ENCODE measurements at regions of chr9 and their contacts with region 1.

Region 1: GRCh38 chr9:128370826-128371621 is at the start of gene URM1:
- DNase-seq: peak; percentile 88 to 97 (median 95)
- ATAC-seq: peak; percentile 98
- H3K4me3 ChIP-seq: peak within 1 kb of the TSS; percentile 92
- H3K4me3 Mint-ChIP-seq: peak within 1 kb of the TSS; percentile 86 to 99 (median 96)
- H3K27ac ChIP-seq: peak within 1 kb of the TSS; percentile 94
- H3K27ac Mint-ChIP-seq: peak within 1 kb of the TSS; percentile 94 to 99 (median 98)
- H3K4me1 ChIP-seq: peaks cover 17% of the 10 kb centered on the region in 2 donors
- H3K4me1 Mint-ChIP-seq: peaks cover 18 to 41% (median 36%) of the 10 kb centered on the region in 7 donors
- H3K27me3 ChIP-seq: no peaks in the 10 kb centered on the region
- H3K27me3 Mint-ChIP-seq: no peaks in the 10 kb centered on the region
- total RNA-seq, gene URM1: 32.3 to 72.4 (median 47.5) TPM

Region 2: DNA sequence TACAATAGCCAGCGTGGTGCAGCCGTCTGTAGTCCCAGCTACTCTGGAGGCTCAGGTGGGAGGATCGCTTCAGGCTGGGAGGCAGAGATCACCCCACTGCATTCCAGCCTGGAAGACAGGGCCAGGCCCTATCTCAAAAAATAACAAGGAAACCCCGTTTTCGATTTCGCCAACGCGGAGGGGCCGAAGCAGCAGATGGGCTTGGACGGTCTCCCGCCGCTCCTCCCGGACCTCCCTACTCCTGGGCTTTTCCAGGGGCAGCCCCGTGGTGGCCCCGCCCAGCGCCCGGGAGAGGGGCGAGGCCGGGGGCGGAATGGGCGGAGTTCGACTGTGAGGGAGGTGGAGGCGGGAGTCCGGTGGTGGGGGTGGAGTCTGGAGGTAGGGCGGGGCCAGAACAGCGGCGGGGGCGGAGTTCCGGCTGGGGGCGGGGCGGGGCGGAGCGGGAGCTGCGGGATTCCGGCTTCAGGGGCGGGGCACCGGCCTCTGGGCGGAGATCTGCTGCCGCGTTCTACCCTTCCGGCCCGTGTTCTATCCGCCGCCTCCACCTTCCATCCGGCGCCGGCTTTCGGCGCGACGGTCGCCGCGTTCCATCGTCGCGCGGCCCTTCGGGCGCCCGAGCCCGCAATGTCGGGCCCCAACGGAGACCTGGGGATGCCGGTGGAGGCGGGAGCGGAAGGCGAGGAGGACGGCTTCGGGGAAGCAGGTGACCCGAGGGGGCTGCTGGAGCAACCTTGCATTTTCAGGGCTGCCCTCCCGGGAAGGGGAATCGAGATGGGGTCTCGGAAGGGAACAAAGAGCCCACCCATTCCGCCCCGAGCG is 211.0 kb before region 1 on chr9 and contains the start of gene BBLN:
- CTCF ChIA-PET with region 1: no interaction called
- POLR2A ChIA-PET with region 1: interaction called, 4 read pairs
- intact Hi-C with region 1: loop called in 1 of 2 experiments (anchors 1 kb)
- DNase-seq: peak; percentile 78 to 94 (median 87)
- ATAC-seq: peak; percentile 94
- H3K4me3 ChIP-seq: peak within 1 kb of the TSS; percentile 97
- H3K4me3 Mint-ChIP-seq: peak within 1 kb of the TSS; percentile 79 to 90 (median 82)
- H3K27ac ChIP-seq: peak within 1 kb of the TSS; percentile 78
- H3K27ac Mint-ChIP-seq: peak within 1 kb of the TSS; percentile 84 to 95 (median 93)
- H3K4me1 ChIP-seq: peaks cover 11 to 12% of the 10 kb centered on the region in 2 donors
- H3K4me1 Mint-ChIP-seq: peaks cover 0 to 28% (median 21%) of the 10 kb centered on the region in 7 donors
- H3K27me3 ChIP-seq: no peaks in the 10 kb centered on the region
- H3K27me3 Mint-ChIP-seq: no peaks in the 10 kb centered on the region
- total RNA-seq, gene BBLN: 42.7 to 87.8 (median 48.0) TPM

Region 3: GRCh38 chr9:128275996-128276573 is 94.9 kb before region 1 on chr9 and contains the starts of genes GOLGA2 and SWI5:
- CTCF ChIA-PET with region 1: no interaction called
- POLR2A ChIA-PET with region 1: interaction called, 6 read pairs
- intact Hi-C with region 1: loop called (anchors 1 kb)
- DNase-seq: peak; percentile 98 to 100 (median 100)
- ATAC-seq: peak; percentile 98
- H3K4me3 ChIP-seq: peak within 1 kb of the TSS; percentile 95
- H3K4me3 Mint-ChIP-seq: peak within 1 kb of the TSS; percentile 94 to 98 (median 96)
- H3K27ac ChIP-seq: peak within 1 kb of the TSS; percentile 90
- H3K27ac Mint-ChIP-seq: peak within 1 kb of the TSS; percentile 94 to 98 (median 97)
- H3K4me1 ChIP-seq: peaks cover 16 to 21% of the 10 kb centered on the region in 2 donors
- H3K4me1 Mint-ChIP-seq: peaks cover 24 to 51% (median 46%) of the 10 kb centered on the region in 7 donors
- H3K27me3 ChIP-seq: no peaks in the 10 kb centered on the region
- H3K27me3 Mint-ChIP-seq: peaks cover 0 to 7% (median 0%) of the 10 kb centered on the region in 5 donors
- total RNA-seq, gene GOLGA2: 56.5 to 76.6 (median 70.6) TPM
- total RNA-seq, gene SWI5: 8.7 to 17.4 (median 9.8) TPM

Region 4: DNA sequence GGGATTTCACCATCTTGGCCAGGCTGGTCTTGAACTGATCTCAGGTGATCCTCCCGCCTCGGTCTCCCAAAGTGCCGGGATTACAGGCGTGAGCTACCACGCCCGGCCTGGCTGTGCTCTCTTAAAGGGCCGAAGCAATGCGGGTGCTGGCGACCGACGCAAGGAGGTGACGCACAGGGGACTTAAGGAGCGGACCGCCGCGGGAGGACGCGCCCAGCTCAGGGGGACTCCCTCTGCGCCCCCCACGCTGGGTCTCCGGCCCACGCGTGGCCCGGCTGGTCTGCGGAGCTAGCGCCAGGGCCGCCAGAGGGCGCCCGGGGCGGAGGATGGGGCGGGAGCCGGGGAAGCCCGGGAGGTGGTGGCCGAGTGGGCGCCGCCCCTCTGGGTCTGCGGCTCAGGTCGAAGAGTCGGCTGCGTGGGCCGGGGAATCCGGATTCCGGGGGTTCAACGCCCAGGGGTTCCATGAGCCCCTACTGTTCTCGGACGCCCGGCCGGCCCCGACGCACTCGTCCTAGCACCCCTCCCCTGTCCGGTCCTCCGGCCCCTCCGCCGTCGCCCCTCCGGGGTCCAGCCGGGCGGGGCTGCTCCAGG is 49.1 kb after region 1 on chr9:
- CTCF ChIA-PET with region 1: no interaction called
- POLR2A ChIA-PET with region 1: no interaction called
- intact Hi-C with region 1: loop called (anchors 1 to 2 kb)
- DNase-seq: peak in 8 of 9 donors; percentile 33 to 85 (median 44)
- ATAC-seq: peak; percentile 92
- H3K4me3 ChIP-seq: peak overlapping the region; percentile 58
- H3K4me3 Mint-ChIP-seq: peak overlapping the region; percentile 70 to 88 (median 81)
- H3K27ac ChIP-seq: no peak overlapping the region
- H3K27ac Mint-ChIP-seq: no peak overlapping the region
- H3K4me1 ChIP-seq: peaks cover 8 to 9% of the 10 kb centered on the region in 2 donors
- H3K4me1 Mint-ChIP-seq: peaks cover 5 to 13% (median 11%) of the 10 kb centered on the region in 7 donors
- H3K27me3 ChIP-seq: peaks cover 5 to 7% of the 10 kb centered on the region in 2 donors
- H3K27me3 Mint-ChIP-seq: peaks cover 16 to 55% (median 25%) of the 10 kb centered on the region in 5 donors

Region 5: GRCh38 chr9:128575469-128575868 is 204.4 kb after region 1 on chr9:
- CTCF ChIA-PET with region 1: no interaction called
- POLR2A ChIA-PET with region 1: no interaction called
- intact Hi-C with region 1: no loop called
- DNase-seq: no peak
- ATAC-seq: no peak
- H3K4me3 ChIP-seq: no peak overlapping the region
- H3K4me3 Mint-ChIP-seq: peak overlapping the region in 4 of 10 donors; percentile 3 to 50 (median 30)
- H3K27ac ChIP-seq: peak overlapping the region; percentile 23
- H3K27ac Mint-ChIP-seq: peak overlapping the region in 7 of 9 donors; percentile 28 to 77 (median 68)
- H3K4me1 ChIP-seq: peaks cover 0 to 11% of the 10 kb centered on the region in 2 donors
- H3K4me1 Mint-ChIP-seq: peaks cover 0 to 24% (median 17%) of the 10 kb centered on the region in 7 donors
- H3K27me3 ChIP-seq: no peaks in the 10 kb centered on the region
- H3K27me3 Mint-ChIP-seq: no peaks in the 10 kb centered on the region

Region 6: DNA sequence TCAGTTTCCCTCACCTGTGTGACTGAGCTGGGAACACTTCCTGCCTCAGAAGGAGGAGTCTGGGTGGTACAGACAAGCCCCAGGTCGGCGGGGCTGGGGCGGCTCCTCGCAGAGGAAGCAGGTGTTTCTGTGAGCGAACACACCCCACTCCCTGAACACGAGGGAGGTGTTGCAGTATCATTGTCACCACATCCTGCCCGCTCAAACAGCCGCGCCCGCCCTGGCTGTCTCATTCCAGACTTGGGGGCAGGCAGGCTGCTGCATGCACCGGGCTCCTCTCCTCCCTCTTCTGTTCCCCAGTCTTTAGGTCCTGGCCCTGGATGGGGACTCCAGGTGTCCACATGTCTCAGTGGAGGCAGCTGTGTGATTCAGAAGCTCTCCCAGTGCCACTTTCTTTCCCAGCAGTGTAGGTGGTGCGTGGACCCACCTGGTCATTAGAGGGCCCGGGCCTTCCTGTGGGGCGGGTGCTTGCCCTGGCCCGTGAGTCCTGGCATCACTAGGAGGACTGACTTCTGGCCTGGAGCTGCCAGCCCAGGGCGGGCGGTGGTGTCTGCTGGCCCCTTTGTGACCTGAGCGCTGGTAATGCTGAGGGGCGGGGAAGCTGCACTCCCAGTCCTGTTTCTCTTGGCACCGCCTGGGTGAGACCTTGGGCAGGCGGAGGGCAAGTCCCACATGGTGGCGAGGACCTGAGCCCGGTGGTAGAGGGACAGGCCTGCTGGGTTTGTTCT is 531.5 kb after region 1 on chr9:
- CTCF ChIA-PET with region 1: no interaction called
- POLR2A ChIA-PET with region 1: interaction called, 5 read pairs
- intact Hi-C with region 1: loop called in 1 of 2 experiments (anchors 1 kb)
- DNase-seq: peak; percentile 61 to 93 (median 90)
- ATAC-seq: peak; percentile 95
- H3K4me3 ChIP-seq: peak overlapping the region; percentile 55
- H3K4me3 Mint-ChIP-seq: peak overlapping the region; percentile 76 to 87 (median 84)
- H3K27ac ChIP-seq: peak overlapping the region; percentile 89
- H3K27ac Mint-ChIP-seq: peak overlapping the region; percentile 85 to 98 (median 96)
- H3K4me1 ChIP-seq: peaks cover 64 to 65% of the 10 kb centered on the region in 2 donors
- H3K4me1 Mint-ChIP-seq: peaks cover 32 to 84% (median 73%) of the 10 kb centered on the region in 7 donors
- H3K27me3 ChIP-seq: no peaks in the 10 kb centered on the region
- H3K27me3 Mint-ChIP-seq: no peaks in the 10 kb centered on the region

Region 7: GRCh38 chr9:129036241-129036922 is 665.4 kb after region 1 on chr9 and contains the start of gene MIGA2:
- CTCF ChIA-PET with region 1: no interaction called
- POLR2A ChIA-PET with region 1: no interaction called
- intact Hi-C with region 1: loop called in 1 of 2 experiments (anchors 1 kb)
- DNase-seq: peak; percentile 78 to 93 (median 90)
- ATAC-seq: peak; percentile 99
- H3K4me3 ChIP-seq: peak within 1 kb of the TSS; percentile 87
- H3K4me3 Mint-ChIP-seq: peak within 1 kb of the TSS; percentile 90 to 99 (median 94)
- H3K27ac ChIP-seq: peak within 1 kb of the TSS; percentile 72
- H3K27ac Mint-ChIP-seq: peak within 1 kb of the TSS; percentile 56 to 93 (median 87)
- H3K4me1 ChIP-seq: peaks cover 13 to 17% of the 10 kb centered on the region in 2 donors
- H3K4me1 Mint-ChIP-seq: peaks cover 22 to 41% (median 37%) of the 10 kb centered on the region in 7 donors
- H3K27me3 ChIP-seq: no peaks in the 10 kb centered on the region
- H3K27me3 Mint-ChIP-seq: no peaks in the 10 kb centered on the region
- total RNA-seq, gene MIGA2: 50.0 to 73.4 (median 60.7) TPM